Psoas muscle (tissue), 8 donors: ENCODE measurements at regions of chr12 and their contacts with region 1.

Region 1: DNA sequence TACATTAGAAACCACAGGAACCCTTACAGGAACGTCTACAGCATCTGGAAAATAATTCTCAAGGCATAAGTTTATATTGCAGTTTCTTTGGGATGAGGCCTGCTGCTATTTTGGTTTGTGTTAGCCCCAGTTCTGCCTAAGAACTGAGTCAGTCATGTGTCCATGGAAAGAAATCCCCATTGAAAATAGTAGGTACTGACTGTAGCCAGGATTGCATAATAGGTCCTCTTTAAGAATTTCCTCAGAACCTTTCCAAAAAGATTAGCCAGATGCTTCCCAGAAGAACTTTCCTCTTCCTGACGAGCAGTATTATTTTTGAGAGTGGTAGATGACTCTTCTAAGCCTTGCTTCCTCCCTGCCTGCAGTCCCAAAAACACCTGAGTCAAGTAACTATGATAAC is 52.6 kb downstream of the RASSF8 start:
- DNase-seq: no peak
- ATAC-seq: peak; percentile 88 to 96 (median 92)
- H3K4me3 ChIP-seq: no peak overlapping the region
- H3K27ac ChIP-seq: peak overlapping the region; percentile 87
- H3K4me1 ChIP-seq: peaks cover 51% of the 10 kb centered on the region
- H3K27me3 ChIP-seq: no peaks in the 10 kb centered on the region
- CTCF ChIP-seq: no peak

Region 2: GRCh38 chr12:25958428-25959070 is 52.5 kb before region 1 on chr12 and contains the start of gene RASSF8:
- intact Hi-C with region 1: loop called (anchors 2 to 5 kb)
- DNase-seq: peak; percentile 84 to 86
- ATAC-seq: peak; percentile 87 to 92 (median 90)
- H3K4me3 ChIP-seq: peak within 1 kb of the TSS; percentile 74
- H3K27ac ChIP-seq: peak within 1 kb of the TSS; percentile 90
- H3K4me1 ChIP-seq: peaks cover 32% of the 10 kb centered on the region
- H3K27me3 ChIP-seq: no peaks in the 10 kb centered on the region
- CTCF ChIP-seq: no peak
- total RNA-seq, gene RASSF8: 41.9 to 80.3 (median 54.2) TPM

Region 3: GRCh38 chr12:25970916-25971653 is 40.0 kb before region 1 on chr12:
- intact Hi-C with region 1: loop called in 1 of 2 experiments (anchors 5 kb)
- DNase-seq: no peak
- ATAC-seq: peak in 1 of 4 donors; percentile 42
- H3K4me3 ChIP-seq: no peak overlapping the region
- H3K27ac ChIP-seq: peak overlapping the region; percentile 18
- H3K4me1 ChIP-seq: peaks cover 46% of the 10 kb centered on the region
- H3K27me3 ChIP-seq: no peaks in the 10 kb centered on the region
- CTCF ChIP-seq: no peak

Region 4: GRCh38 chr12:26047401-26048226 is 36.5 kb after region 1 on chr12:
- intact Hi-C with region 1: no loop called
- DNase-seq: peak in 1 of 2 donors; percentile 56
- ATAC-seq: peak; percentile 92 to 96 (median 96)
- H3K4me3 ChIP-seq: no peak overlapping the region
- H3K27ac ChIP-seq: peak overlapping the region; percentile 87
- H3K4me1 ChIP-seq: peaks cover 23% of the 10 kb centered on the region
- H3K27me3 ChIP-seq: no peaks in the 10 kb centered on the region
- CTCF ChIP-seq: peak; percentile 45